Vagina (tissue), 2 donors: ENCODE measurements at regions of chr14 and their contacts with region 1.

Region 1: GRCh38 chr14:21039585-21040369 is 2.4 kb upstream of the RNASE7 start:
- DNase-seq: no peak
- H3K4me3 ChIP-seq: peak overlapping the region in 1 of 2 donors; percentile 9
- H3K27ac ChIP-seq: peak overlapping the region; percentile 88
- H3K4me1 ChIP-seq: peaks cover 51% of the 10 kb centered on the region
- H3K27me3 ChIP-seq: no peaks in the 10 kb centered on the region
- CTCF ChIP-seq: peak; percentile 19 to 68 (median 61)
- POLR2A ChIP-seq: no peak

Region 2: GRCh38 chr14:21003788-21004346 is 35.9 kb before region 1 on chr14:
- intact Hi-C with region 1: loop called (anchors 5 kb)
- DNase-seq: no peak
- H3K4me3 ChIP-seq: peak overlapping the region; percentile 4 to 23
- H3K27ac ChIP-seq: peak overlapping the region; percentile 58
- H3K4me1 ChIP-seq: peaks cover 15% of the 10 kb centered on the region
- H3K27me3 ChIP-seq: no peaks in the 10 kb centered on the region
- CTCF ChIP-seq: no peak
- POLR2A ChIP-seq: no peak

Region 3: DNA sequence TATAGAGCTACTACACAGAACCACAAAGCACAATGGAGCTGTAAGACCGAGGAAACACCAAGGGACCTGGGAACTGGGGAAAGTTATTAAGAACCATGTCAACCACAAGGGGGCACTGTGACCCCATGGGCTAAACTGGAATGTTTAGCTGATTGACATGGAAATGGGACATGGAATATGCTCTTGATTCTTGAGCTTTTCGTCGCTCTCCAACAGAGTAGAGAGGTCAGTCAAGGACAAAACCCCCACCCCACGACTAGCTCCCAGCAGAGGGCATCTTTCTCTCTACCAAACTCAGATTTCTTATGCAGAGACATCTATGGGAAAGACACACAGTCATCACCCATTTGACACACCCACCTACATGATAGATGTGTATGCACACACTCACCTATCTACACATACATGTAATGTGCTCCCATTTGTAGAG is 25.0 kb before region 1 on chr14:
- intact Hi-C with region 1: loop called (anchors 2 kb)
- DNase-seq: no peak
- H3K4me3 ChIP-seq: no peak overlapping the region
- H3K27ac ChIP-seq: peak overlapping the region; percentile 56
- H3K4me1 ChIP-seq: peaks cover 6% of the 10 kb centered on the region
- H3K27me3 ChIP-seq: no peaks in the 10 kb centered on the region
- CTCF ChIP-seq: peak; percentile 82 to 94 (median 89)
- POLR2A ChIP-seq: no peak

Region 4: DNA sequence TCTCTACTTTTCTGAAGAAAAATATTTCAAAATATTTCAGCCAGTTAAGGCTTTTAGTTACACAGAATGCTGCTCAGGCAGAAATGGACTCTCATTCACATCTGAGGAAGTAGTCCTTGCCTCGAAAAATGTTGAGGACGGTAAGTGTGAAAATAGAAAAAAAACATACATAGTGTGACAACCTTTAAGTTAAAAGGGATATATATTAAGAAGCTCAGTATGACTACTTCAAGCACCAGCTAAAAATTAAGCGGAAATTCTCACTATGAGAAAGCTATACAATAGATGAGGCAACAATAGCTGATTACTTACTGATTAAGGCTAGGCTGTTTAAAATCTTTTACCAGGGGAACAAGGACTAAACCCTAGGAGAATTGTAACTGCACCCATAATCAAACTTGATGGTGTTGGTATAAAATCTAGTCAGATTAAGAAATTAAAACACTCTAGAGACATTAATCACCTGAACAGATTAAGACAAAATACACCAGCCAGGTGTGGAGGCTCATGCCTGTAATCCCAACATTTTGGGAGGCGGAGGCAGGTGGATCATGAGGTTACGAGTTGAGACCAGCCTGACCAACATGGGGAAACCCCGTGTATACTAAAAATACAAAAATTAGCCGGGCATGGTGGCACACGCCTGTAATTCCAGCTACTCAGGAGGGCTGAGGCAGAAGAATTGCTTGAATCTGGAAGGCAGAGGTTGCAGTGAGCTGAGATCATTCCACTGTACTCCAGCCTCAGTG is 175.5 kb after region 1 on chr14:
- intact Hi-C with region 1: no loop called
- DNase-seq: no peak
- H3K4me3 ChIP-seq: no peak overlapping the region
- H3K27ac ChIP-seq: no peak overlapping the region
- H3K4me1 ChIP-seq: peaks cover 81% of the 10 kb centered on the region
- H3K27me3 ChIP-seq: no peaks in the 10 kb centered on the region
- CTCF ChIP-seq: no peak
- POLR2A ChIP-seq: no peak